A673 (cell line): ENCODE measurements at regions of chr13 and their contacts with region 1.

Region 1: GRCh38 chr13:27826379-27827353 is 34.4 kb downstream of the GSX1 start:
- DNase-seq: peak; percentile 88
- H3K4me3 ChIP-seq: no peak overlapping the region
- H3K27ac ChIP-seq: no peak overlapping the region
- H3K4me1 ChIP-seq: no peaks in the 10 kb centered on the region
- H3K27me3 ChIP-seq: peaks cover 57% of the 10 kb centered on the region
- CTCF ChIP-seq: peak; percentile 93

Region 2: GRCh38 chr13:26985285-26985878 is 841.3 kb before region 1 on chr13:
- CTCF ChIA-PET with region 1: interaction called, 10 read pairs
- POLR2A ChIA-PET with region 1: no interaction called
- intact Hi-C with region 1: loop called (anchors 10 kb)
- DNase-seq: peak; percentile 82
- H3K4me3 ChIP-seq: no peak overlapping the region
- H3K27ac ChIP-seq: no peak overlapping the region
- H3K4me1 ChIP-seq: no peaks in the 10 kb centered on the region
- H3K27me3 ChIP-seq: peaks cover 6% of the 10 kb centered on the region
- CTCF ChIP-seq: peak; percentile 78

Region 3: GRCh38 chr13:27406178-27406939 is 420.3 kb before region 1 on chr13:
- CTCF ChIA-PET with region 1: interaction called, 6 read pairs
- POLR2A ChIA-PET with region 1: interaction called, 3 read pairs
- intact Hi-C with region 1: loop called (anchors 1 kb)
- DNase-seq: peak; percentile 43
- H3K4me3 ChIP-seq: no peak overlapping the region
- H3K27ac ChIP-seq: no peak overlapping the region
- H3K4me1 ChIP-seq: no peaks in the 10 kb centered on the region
- H3K27me3 ChIP-seq: peaks cover 34% of the 10 kb centered on the region
- CTCF ChIP-seq: peak; percentile 63

Region 4: GRCh38 chr13:27533155-27533643 is 293.5 kb before region 1 on chr13:
- CTCF ChIA-PET with region 1: interaction called, 7 read pairs
- POLR2A ChIA-PET with region 1: no interaction called
- intact Hi-C with region 1: loop called (anchors 2 kb)
- DNase-seq: peak; percentile 46
- H3K4me3 ChIP-seq: no peak overlapping the region
- H3K27ac ChIP-seq: no peak overlapping the region
- H3K4me1 ChIP-seq: no peaks in the 10 kb centered on the region
- H3K27me3 ChIP-seq: no peaks in the 10 kb centered on the region
- CTCF ChIP-seq: peak; percentile 95

Region 5: GRCh38 chr13:27713767-27714166 is 112.9 kb before region 1 on chr13:
- CTCF ChIA-PET with region 1: no interaction called
- POLR2A ChIA-PET with region 1: no interaction called
- intact Hi-C with region 1: no loop called
- DNase-seq: no peak
- H3K4me3 ChIP-seq: no peak overlapping the region
- H3K27ac ChIP-seq: no peak overlapping the region
- H3K4me1 ChIP-seq: no peaks in the 10 kb centered on the region
- H3K27me3 ChIP-seq: peaks cover 38% of the 10 kb centered on the region
- CTCF ChIP-seq: no peak

Region 6: GRCh38 chr13:27783111-27783510 is 43.6 kb before region 1 on chr13:
- CTCF ChIA-PET with region 1: no interaction called
- POLR2A ChIA-PET with region 1: no interaction called
- intact Hi-C with region 1: no loop called
- DNase-seq: no peak
- H3K4me3 ChIP-seq: no peak overlapping the region
- H3K27ac ChIP-seq: no peak overlapping the region
- H3K4me1 ChIP-seq: no peaks in the 10 kb centered on the region
- H3K27me3 ChIP-seq: peaks cover 95% of the 10 kb centered on the region
- CTCF ChIP-seq: peak; percentile 24

Region 7: GRCh38 chr13:27953676-27954405 is 127.2 kb after region 1 on chr13:
- CTCF ChIA-PET with region 1: interaction called, 22 read pairs
- POLR2A ChIA-PET with region 1: no interaction called
- intact Hi-C with region 1: loop called (anchors 2 kb)
- DNase-seq: peak; percentile 85
- H3K4me3 ChIP-seq: peak overlapping the region; percentile 46
- H3K27ac ChIP-seq: no peak overlapping the region
- H3K4me1 ChIP-seq: no peaks in the 10 kb centered on the region
- H3K27me3 ChIP-seq: peaks cover 71% of the 10 kb centered on the region
- CTCF ChIP-seq: peak; percentile 73

Region 8: DNA sequence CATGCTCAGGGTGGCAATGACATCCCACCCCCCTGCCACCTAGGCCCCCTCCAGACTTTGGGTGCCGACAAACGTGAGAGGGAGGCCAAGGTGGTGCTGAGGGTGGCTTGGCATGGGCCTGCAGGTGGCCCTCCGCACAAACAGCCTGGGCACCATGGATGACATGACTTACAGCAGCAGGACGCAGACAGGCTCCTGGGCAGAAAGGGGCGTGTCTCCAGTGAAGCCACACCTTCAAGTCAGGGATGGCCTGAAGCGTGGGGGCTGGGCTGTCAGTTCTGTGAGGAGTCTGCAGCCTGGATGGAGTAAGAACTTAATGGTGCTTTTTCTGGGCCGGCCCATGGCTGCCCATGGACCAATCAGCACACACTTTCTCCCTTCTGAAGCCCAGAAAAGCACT is 857.6 kb after region 1 on chr13:
- CTCF ChIA-PET with region 1: no interaction called
- POLR2A ChIA-PET with region 1: no interaction called
- intact Hi-C with region 1: no loop called
- DNase-seq: peak; percentile 14
- H3K4me3 ChIP-seq: no peak overlapping the region
- H3K27ac ChIP-seq: no peak overlapping the region
- H3K4me1 ChIP-seq: no peaks in the 10 kb centered on the region
- H3K27me3 ChIP-seq: no peaks in the 10 kb centered on the region
- CTCF ChIP-seq: no peak